Panc1 (cell line): ENCODE measurements at regions of chr5 and their contacts with region 1.

Region 1: GRCh38 chr5:2038321-2039179 is 155.8 kb upstream of the IRX4 start:
- DNase-seq: peak; percentile 5
- ATAC-seq: peak; percentile 96
- H3K4me3 ChIP-seq: peak overlapping the region; percentile 13 to 17
- H3K27ac ChIP-seq: no peak overlapping the region
- H3K4me1 ChIP-seq: no peaks in the 10 kb centered on the region
- H3K27me3 ChIP-seq: peaks cover 14% of the 10 kb centered on the region
- CTCF ChIP-seq: peak; percentile 94

Region 2: GRCh38 chr5:1763548-1763911 is 275.0 kb before region 1 on chr5:
- CTCF ChIA-PET with region 1: interaction called, 6 read pairs
- POLR2A ChIA-PET with region 1: no interaction called
- in situ Hi-C with region 1: no loop called
- intact Hi-C with region 1: loop called (anchors 2 kb)
- DNase-seq: peak; percentile 28
- ATAC-seq: peak; percentile 90
- H3K4me3 ChIP-seq: no peak overlapping the region
- H3K27ac ChIP-seq: no peak overlapping the region
- H3K4me1 ChIP-seq: no peaks in the 10 kb centered on the region
- H3K27me3 ChIP-seq: no peaks in the 10 kb centered on the region
- CTCF ChIP-seq: peak; percentile 93

Region 3: DNA sequence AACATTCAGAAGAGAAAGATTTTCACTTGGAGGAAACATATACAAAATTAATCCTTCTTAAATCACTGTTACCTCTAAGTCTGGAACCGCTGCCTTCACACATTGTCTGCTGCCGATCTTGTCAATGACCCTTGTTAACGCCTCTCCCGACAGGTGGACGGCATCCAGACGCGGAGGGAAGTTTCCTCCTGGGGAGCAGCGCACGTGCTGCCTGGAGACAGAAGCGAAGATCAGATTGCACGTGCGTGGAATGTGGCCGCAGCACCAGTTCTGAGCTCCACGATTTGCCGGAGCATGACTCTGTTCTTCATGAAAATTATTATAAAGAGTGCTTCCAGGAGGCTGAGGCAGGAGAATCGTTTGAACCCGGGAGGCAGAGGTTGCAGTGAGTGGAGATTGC is 27.8 kb after region 1 on chr5:
- CTCF ChIA-PET with region 1: no interaction called
- POLR2A ChIA-PET with region 1: no interaction called
- in situ Hi-C with region 1: no loop called
- intact Hi-C with region 1: no loop called
- DNase-seq: no peak
- ATAC-seq: no peak
- H3K4me3 ChIP-seq: no peak overlapping the region
- H3K27ac ChIP-seq: no peak overlapping the region
- H3K4me1 ChIP-seq: no peaks in the 10 kb centered on the region
- H3K27me3 ChIP-seq: no peaks in the 10 kb centered on the region; the same call in 1 of the 2 replicates
- CTCF ChIP-seq: no peak